H1 (cell line): ENCODE measurements at regions of chr15 and their contacts with region 1.

Region 1: DNA sequence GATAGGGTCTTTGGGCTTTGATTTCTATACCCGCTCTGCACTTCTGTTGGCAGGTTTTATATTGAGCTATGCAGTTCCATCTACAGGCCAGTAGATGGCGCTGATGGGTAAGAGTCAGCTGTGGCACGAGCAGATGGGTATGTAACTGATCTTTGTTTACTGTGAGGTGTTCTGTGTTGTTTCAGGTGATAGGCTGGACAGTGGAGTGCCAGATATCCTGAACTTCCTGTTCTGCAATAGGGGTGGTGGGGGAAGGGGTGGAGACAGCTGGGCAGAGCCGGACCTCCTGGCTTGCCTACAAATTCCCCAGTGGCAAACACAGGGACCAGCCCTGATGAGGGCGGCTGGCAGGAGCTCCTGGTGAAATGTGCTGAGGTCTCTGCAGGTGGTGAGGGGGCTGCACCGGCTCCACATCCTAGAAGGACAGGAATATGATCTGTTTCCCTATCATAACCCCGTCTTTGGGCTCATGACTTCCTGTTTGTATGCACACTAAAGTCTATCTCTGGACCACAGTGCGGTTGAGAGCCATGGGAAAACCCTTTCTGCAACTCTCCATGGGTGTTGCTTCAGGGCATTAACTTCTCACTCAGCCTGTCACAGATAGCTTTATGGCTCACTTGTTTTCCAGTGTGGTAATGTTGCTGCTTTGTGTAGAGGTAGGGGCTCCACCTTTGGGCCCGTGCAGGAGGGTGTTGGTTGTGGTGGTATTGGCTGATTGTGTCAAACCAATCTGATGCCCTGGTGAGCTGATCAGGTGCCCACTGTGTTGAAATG is 13.4 kb upstream of the FAM98B start:
- DNase-seq: peak; percentile 27 to 62
- H3K4me3 ChIP-seq: peak overlapping the region in 1 of 4 experiments; percentile 8; a peak in 1 of 8 replicates
- H3K27ac ChIP-seq: no peak overlapping the region
- H3K4me1 ChIP-seq: peaks cover 0 to 4% (median 3%) of the 10 kb centered on the region in 4 experiments; a peak in 3 of 7 replicates
- H3K27me3 ChIP-seq: no peaks in the 10 kb centered on the region
- CTCF ChIP-seq: peak; percentile 66 to 90 (median 80)
- EP300 ChIP-seq: peak in 1 of 2 experiments; percentile 44; a peak in 1 of 3 replicates
- POLR2A ChIP-seq: no peak
- RAD21 ChIP-seq: peak; percentile 82 to 91

Region 2: DNA sequence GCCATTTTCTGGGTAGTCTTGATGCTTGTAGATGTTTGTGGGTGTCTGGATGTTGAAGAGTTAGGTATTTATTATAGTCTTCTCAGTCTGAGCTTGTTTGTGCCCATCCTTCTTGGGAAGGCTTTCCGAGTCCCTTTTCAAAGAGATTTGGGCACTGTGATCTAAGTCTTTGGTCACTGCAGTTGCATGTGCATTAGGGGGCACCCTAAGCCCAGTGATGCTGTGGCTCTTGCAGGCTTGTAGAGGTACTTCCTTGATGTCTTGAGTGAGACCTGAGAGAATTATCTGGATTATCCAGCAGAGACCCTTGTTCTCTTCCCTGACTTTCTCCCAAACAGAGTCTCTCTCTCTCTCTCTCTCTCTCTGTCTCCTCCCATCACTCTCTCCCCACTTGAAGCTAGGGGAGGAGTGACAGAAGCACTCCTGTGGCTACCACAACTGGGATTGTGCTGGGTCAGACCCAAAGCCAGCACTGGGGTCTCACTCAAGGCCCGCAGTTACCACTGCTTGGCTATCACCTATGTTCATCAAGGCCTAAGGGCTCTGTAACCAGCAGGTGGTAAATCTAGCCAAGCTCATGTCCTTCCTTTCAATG is 437.6 kb before region 1 on chr15:
- CTCF ChIA-PET with region 1: interaction called, 10 read pairs
- POLR2A ChIA-PET with region 1: no interaction called
- DNase-seq: peak; percentile 27 to 66
- H3K4me3 ChIP-seq: no peak overlapping the region
- H3K27ac ChIP-seq: no peak overlapping the region
- H3K4me1 ChIP-seq: no peaks in the 10 kb centered on the region
- H3K27me3 ChIP-seq: no peaks in the 10 kb centered on the region
- CTCF ChIP-seq: peak; percentile 67 to 92 (median 91)
- EP300 ChIP-seq: no peak
- POLR2A ChIP-seq: no peak
- RAD21 ChIP-seq: peak; percentile 98 to 99

Region 3: GRCh38 chr15:38201714-38202113 is 238.8 kb before region 1 on chr15:
- CTCF ChIA-PET with region 1: no interaction called
- POLR2A ChIA-PET with region 1: no interaction called
- DNase-seq: no peak
- H3K4me3 ChIP-seq: no peak overlapping the region
- H3K27ac ChIP-seq: no peak overlapping the region
- H3K4me1 ChIP-seq: no peaks in the 10 kb centered on the region
- H3K27me3 ChIP-seq: no peaks in the 10 kb centered on the region
- CTCF ChIP-seq: no peak
- EP300 ChIP-seq: no peak
- POLR2A ChIP-seq: no peak
- RAD21 ChIP-seq: no peak

Region 4: GRCh38 chr15:38427380-38427779 is 13.2 kb before region 1 on chr15:
- CTCF ChIA-PET with region 1: interaction called, 27 read pairs
- POLR2A ChIA-PET with region 1: no interaction called
- DNase-seq: no peak
- H3K4me3 ChIP-seq: no peak overlapping the region
- H3K27ac ChIP-seq: no peak overlapping the region
- H3K4me1 ChIP-seq: no peaks in the 10 kb centered on the region
- H3K27me3 ChIP-seq: no peaks in the 10 kb centered on the region
- CTCF ChIP-seq: peak in 2 of 3 experiments; percentile 14 to 37; a peak in 2 of 4 replicates
- EP300 ChIP-seq: no peak
- POLR2A ChIP-seq: no peak
- RAD21 ChIP-seq: peak; percentile 5 to 30; a peak in 1 of 4 replicates

Region 5: DNA sequence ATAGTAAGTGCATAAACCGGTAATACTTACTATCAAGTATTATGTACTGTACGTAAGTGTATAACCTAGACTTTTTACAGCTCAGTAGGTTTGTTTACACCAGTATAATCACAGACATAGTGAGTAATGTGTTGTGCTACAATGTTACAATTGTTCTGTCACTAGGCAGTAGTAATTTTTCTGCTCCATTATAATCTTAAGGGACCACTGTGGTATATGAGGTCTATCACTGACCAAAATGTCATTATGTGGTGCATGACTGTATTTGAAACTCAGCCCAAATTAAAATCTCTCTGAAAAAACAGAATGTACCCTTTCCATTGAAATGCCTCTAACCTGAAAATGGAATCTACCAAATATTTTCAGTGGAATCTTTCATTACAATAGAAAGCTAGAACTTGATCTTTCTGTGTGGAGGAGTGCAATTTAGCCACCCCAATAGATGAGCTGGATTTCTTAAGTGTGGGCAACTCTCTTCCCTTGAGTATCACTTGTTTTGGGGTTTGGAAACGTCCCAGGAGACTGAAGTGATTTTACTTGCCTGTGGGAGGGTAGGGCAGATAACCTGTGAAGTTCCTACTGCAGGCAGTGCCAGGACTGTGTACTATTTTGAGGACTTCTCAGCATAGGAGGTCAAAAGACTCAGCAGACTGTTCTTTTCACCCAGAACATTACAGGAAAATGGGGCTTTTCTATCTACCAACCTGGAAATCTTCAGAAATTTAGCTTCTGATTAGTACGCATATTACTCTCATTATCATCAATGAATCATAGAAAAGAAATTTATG is 64.3 kb after region 1 on chr15:
- CTCF ChIA-PET with region 1: interaction called, 17 read pairs
- POLR2A ChIA-PET with region 1: no interaction called
- DNase-seq: no peak
- H3K4me3 ChIP-seq: no peak overlapping the region
- H3K27ac ChIP-seq: no peak overlapping the region
- H3K4me1 ChIP-seq: no peaks in the 10 kb centered on the region
- H3K27me3 ChIP-seq: no peaks in the 10 kb centered on the region
- CTCF ChIP-seq: no peak
- EP300 ChIP-seq: no peak
- POLR2A ChIP-seq: no peak
- RAD21 ChIP-seq: no peak

Region 6: GRCh38 chr15:38683382-38684242 is 243.1 kb after region 1 on chr15:
- CTCF ChIA-PET with region 1: interaction called, 61 read pairs
- POLR2A ChIA-PET with region 1: no interaction called
- DNase-seq: peak in 1 of 2 experiments; percentile 58
- H3K4me3 ChIP-seq: no peak overlapping the region
- H3K27ac ChIP-seq: no peak overlapping the region
- H3K4me1 ChIP-seq: peaks cover 0 to 1% (median 0%) of the 10 kb centered on the region in 4 experiments; a peak in 1 of 7 replicates
- H3K27me3 ChIP-seq: no peaks in the 10 kb centered on the region
- CTCF ChIP-seq: peak in 2 of 3 experiments; percentile 70 to 81; a peak in 3 of 4 replicates
- EP300 ChIP-seq: no peak
- POLR2A ChIP-seq: no peak
- RAD21 ChIP-seq: peak; percentile 85 to 89